Activated CD8-positive, alpha-beta T cell treated with anti-CD3 and anti-CD28 coated beads, Interleukin-2, amount 10 ng/mL, durations not matched to agents 7 days and 5 days (primary cell): ENCODE measurements at regions of chr17 and their contacts with region 1.

Region 1: GRCh38 chr17:69607162-69607834 is 192.8 kb downstream of the MAP2K6 start:
- DNase-seq: peak; percentile 65
- ATAC-seq: peak; percentile 74
- H3K4me3 Mint-ChIP-seq: no peak overlapping the region
- H3K27ac Mint-ChIP-seq: peak overlapping the region; percentile 27
- H3K4me1 Mint-ChIP-seq: peaks cover 37% of the 10 kb centered on the region
- H3K27me3 Mint-ChIP-seq: no peaks in the 10 kb centered on the region

Region 2: GRCh38 chr17:69578385-69578936 is 28.8 kb before region 1 on chr17:
- CTCF ChIA-PET with region 1: interaction called, 11 read pairs
- POLR2A ChIA-PET with region 1: no interaction called
- DNase-seq: no peak
- ATAC-seq: no peak
- H3K4me3 Mint-ChIP-seq: no peak overlapping the region
- H3K27ac Mint-ChIP-seq: no peak overlapping the region
- H3K4me1 Mint-ChIP-seq: peaks cover 24% of the 10 kb centered on the region
- H3K27me3 Mint-ChIP-seq: peaks cover 24% of the 10 kb centered on the region

Region 3: GRCh38 chr17:69620363-69620762 is 13.1 kb after region 1 on chr17:
- CTCF ChIA-PET with region 1: interaction called, 10 read pairs
- POLR2A ChIA-PET with region 1: no interaction called
- DNase-seq: no peak
- ATAC-seq: no peak
- H3K4me3 Mint-ChIP-seq: no peak overlapping the region
- H3K27ac Mint-ChIP-seq: no peak overlapping the region
- H3K4me1 Mint-ChIP-seq: no peaks in the 10 kb centered on the region
- H3K27me3 Mint-ChIP-seq: no peaks in the 10 kb centered on the region

Region 4: GRCh38 chr17:70552230-70552981 is 945.1 kb after region 1 on chr17:
- CTCF ChIA-PET with region 1: interaction called, 14 read pairs
- POLR2A ChIA-PET with region 1: no interaction called
- DNase-seq: no peak
- ATAC-seq: no peak
- H3K4me3 Mint-ChIP-seq: no peak overlapping the region
- H3K27ac Mint-ChIP-seq: no peak overlapping the region
- H3K4me1 Mint-ChIP-seq: no peaks in the 10 kb centered on the region
- H3K27me3 Mint-ChIP-seq: no peaks in the 10 kb centered on the region